ENCODE measurements at regions of chr10 and their contacts with region 1.

Region 1: GRCh38 chr10:14009371-14010100 is 321.2 kb downstream of the FRMD4A start:
- DNase-seq: peak; percentile 27 to 92 (median 61)
- ATAC-seq: peak; percentile 84
- H3K4me3 ChIP-seq: peak overlapping the region; percentile 37 to 42
- H3K4me3 Mint-ChIP-seq: peak overlapping the region; percentile 84
- H3K27ac ChIP-seq: peak overlapping the region; percentile 23 to 34
- H3K27ac Mint-ChIP-seq: peak overlapping the region; percentile 91
- H3K4me1 ChIP-seq: peaks cover 33% of the 10 kb centered on the region
- H3K4me1 Mint-ChIP-seq: peaks cover 44% of the 10 kb centered on the region
- H3K27me3 ChIP-seq: no peaks in the 10 kb centered on the region
- H3K27me3 Mint-ChIP-seq: no peaks in the 10 kb centered on the region
- CTCF ChIP-seq: no peak

Region 2: GRCh38 chr10:14032395-14032998 is 23.0 kb after region 1 on chr10:
- CTCF ChIA-PET with region 1: interaction called, 3 read pairs
- POLR2A ChIA-PET with region 1: no interaction called
- intact Hi-C with region 1: loop called in 1 of 2 experiments (anchors 2 kb)
- DNase-seq: peak in 8 of 9 experiments; percentile 23 to 66 (median 53)
- ATAC-seq: peak; percentile 62
- H3K4me3 ChIP-seq: no peak overlapping the region
- H3K4me3 Mint-ChIP-seq: no peak overlapping the region
- H3K27ac ChIP-seq: no peak overlapping the region
- H3K27ac Mint-ChIP-seq: no peak overlapping the region
- H3K4me1 ChIP-seq: peaks cover 4% of the 10 kb centered on the region
- H3K4me1 Mint-ChIP-seq: peaks cover 9% of the 10 kb centered on the region
- H3K27me3 ChIP-seq: peaks cover 0 to 1% of the 10 kb centered on the region in 2 experiments
- H3K27me3 Mint-ChIP-seq: no peaks in the 10 kb centered on the region
- CTCF ChIP-seq: peak; percentile 73